Posterior vena cava (tissue), 2 donors: ENCODE measurements at regions of chr11 and their contacts with region 1.

Region 1: DNA sequence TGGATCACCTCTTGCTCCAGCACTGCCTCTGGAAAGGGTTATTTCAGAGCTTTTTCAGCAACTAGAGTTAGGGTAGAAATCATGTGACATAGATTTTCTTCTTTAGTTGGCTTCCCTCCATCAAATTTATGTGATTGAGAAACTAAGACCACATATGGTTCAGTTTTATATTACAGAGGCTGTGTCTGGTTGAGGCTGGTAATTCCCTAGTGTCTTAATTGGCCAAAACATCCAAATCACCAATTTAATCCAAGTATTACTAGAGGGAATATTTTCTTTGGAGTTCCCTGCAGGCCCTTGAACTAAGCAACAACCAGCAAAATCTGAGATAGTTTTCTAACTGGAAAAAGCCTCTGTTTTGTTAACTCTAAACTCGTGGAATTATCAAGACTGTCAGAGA is 136.3 kb downstream of the ARHGAP42 start:
- DNase-seq: no peak

Region 2: GRCh38 chr11:99739464-99740089 is 1083.8 kb before region 1 on chr11:
- intact Hi-C with region 1: loop called in 1 of 2 experiments (anchors 5 kb)
- DNase-seq: no peak

Region 3: DNA sequence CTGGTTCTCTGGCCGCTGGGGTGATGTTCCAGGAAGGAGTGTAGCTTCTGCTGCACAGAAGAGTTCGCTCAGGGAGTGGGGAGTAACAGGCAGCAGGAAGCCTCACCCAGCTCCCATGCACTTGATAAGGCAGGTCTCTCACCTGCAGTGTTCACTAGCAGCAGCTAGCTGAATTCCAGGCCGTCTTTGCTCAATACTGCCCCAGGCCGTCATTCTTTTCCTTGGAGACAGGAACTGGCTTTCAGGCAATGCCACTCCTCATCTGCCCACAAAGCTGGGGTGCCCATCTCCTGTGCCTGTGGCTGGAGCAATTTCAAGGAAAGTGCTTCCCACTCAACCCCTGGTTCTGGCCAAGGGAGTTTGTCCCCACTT is 70.2 kb before region 1 on chr11:
- intact Hi-C with region 1: no loop called
- DNase-seq: no peak

Region 4: GRCh38 chr11:101019870-101020269 is 196.5 kb after region 1 on chr11:
- intact Hi-C with region 1: no loop called
- DNase-seq: no peak

Region 5: GRCh38 chr11:102410382-102410784 is 1587.0 kb after region 1 on chr11:
- intact Hi-C with region 1: no loop called
- DNase-seq: no peak